Activated naive CD4-positive, alpha-beta T cell treated with anti-CD3 and anti-CD28 coated beads, Interleukin-2, amount 10 ng/mL, durations not matched to agents 7 days and 5 days (primary cell): ENCODE measurements at regions of chr1 and their contacts with region 1.

Region 1: GRCh38 chr1:152189657-152190442 is 30.8 kb upstream of the RPTN start:
- DNase-seq: peak; percentile 79
- H3K4me3 Mint-ChIP-seq: peak overlapping the region; percentile 61
- H3K27ac Mint-ChIP-seq: no peak overlapping the region
- H3K4me1 Mint-ChIP-seq: peaks cover 5% of the 10 kb centered on the region
- H3K27me3 Mint-ChIP-seq: peaks cover 35% of the 10 kb centered on the region

Region 2: GRCh38 chr1:152047730-152048402 is 142.0 kb before region 1 on chr1:
- CTCF ChIA-PET with region 1: interaction called, 270 read pairs
- DNase-seq: peak; percentile 92
- H3K4me3 Mint-ChIP-seq: peak overlapping the region; percentile 70
- H3K27ac Mint-ChIP-seq: peak overlapping the region; percentile 98
- H3K4me1 Mint-ChIP-seq: peaks cover 54% of the 10 kb centered on the region
- H3K27me3 Mint-ChIP-seq: peaks cover 13% of the 10 kb centered on the region

Region 3: GRCh38 chr1:152110860-152111514 is 78.9 kb before region 1 on chr1:
- CTCF ChIA-PET with region 1: interaction called, 46 read pairs
- DNase-seq: peak; percentile 52
- H3K4me3 Mint-ChIP-seq: no peak overlapping the region
- H3K27ac Mint-ChIP-seq: no peak overlapping the region
- H3K4me1 Mint-ChIP-seq: peaks cover 5% of the 10 kb centered on the region
- H3K27me3 Mint-ChIP-seq: peaks cover 23% of the 10 kb centered on the region

Region 4: GRCh38 chr1:152141974-152142584 is 47.8 kb before region 1 on chr1:
- CTCF ChIA-PET with region 1: interaction called, 13 read pairs
- DNase-seq: no peak
- H3K4me3 Mint-ChIP-seq: no peak overlapping the region
- H3K27ac Mint-ChIP-seq: no peak overlapping the region
- H3K4me1 Mint-ChIP-seq: no peaks in the 10 kb centered on the region
- H3K27me3 Mint-ChIP-seq: peaks cover 9% of the 10 kb centered on the region

Region 5: GRCh38 chr1:152175544-152175943 is 14.3 kb before region 1 on chr1:
- CTCF ChIA-PET with region 1: interaction called, 39 read pairs
- DNase-seq: no peak
- H3K4me3 Mint-ChIP-seq: no peak overlapping the region
- H3K27ac Mint-ChIP-seq: no peak overlapping the region
- H3K4me1 Mint-ChIP-seq: no peaks in the 10 kb centered on the region
- H3K27me3 Mint-ChIP-seq: peaks cover 3% of the 10 kb centered on the region

Region 6: DNA sequence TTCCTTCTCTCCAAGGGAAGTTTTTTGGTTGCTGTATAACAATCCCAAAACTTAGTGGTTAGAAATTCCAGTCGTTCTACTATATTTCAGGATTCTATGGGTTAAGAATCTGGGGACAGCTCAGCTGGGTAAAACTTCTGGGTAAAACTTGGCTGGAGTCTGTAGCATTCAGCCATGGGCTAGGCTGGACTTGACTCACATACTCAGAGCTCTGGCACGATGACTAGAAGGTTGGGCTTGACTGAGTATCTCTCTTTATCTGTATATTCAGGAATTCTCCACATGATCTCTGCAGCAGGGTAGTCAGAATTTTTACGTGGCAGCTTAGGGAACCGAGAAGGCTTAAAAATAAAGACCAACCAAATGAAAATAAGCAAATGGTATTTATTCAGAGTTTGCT is 62.3 kb after region 1 on chr1:
- CTCF ChIA-PET with region 1: no interaction called
- DNase-seq: no peak
- H3K4me3 Mint-ChIP-seq: no peak overlapping the region
- H3K27ac Mint-ChIP-seq: no peak overlapping the region
- H3K4me1 Mint-ChIP-seq: no peaks in the 10 kb centered on the region
- H3K27me3 Mint-ChIP-seq: no peaks in the 10 kb centered on the region

Region 7: GRCh38 chr1:152440635-152441471 is 251.0 kb after region 1 on chr1:
- CTCF ChIA-PET with region 1: interaction called, 21 read pairs
- DNase-seq: peak; percentile 78
- H3K4me3 Mint-ChIP-seq: no peak overlapping the region
- H3K27ac Mint-ChIP-seq: no peak overlapping the region
- H3K4me1 Mint-ChIP-seq: no peaks in the 10 kb centered on the region
- H3K27me3 Mint-ChIP-seq: peaks cover 30% of the 10 kb centered on the region